Calu3 (cell line): ENCODE measurements at regions of chr2 and their contacts with region 1.

Region 1: GRCh38 chr2:27703638-27704341 is 40.1 kb downstream of the SLC4A1AP start:
- DNase-seq: peak; percentile 90
- H3K4me3 Mint-ChIP-seq: no peak overlapping the region
- H3K27ac Mint-ChIP-seq: peak overlapping the region; percentile 37
- H3K4me1 Mint-ChIP-seq: peaks cover 31% of the 10 kb centered on the region
- H3K27me3 Mint-ChIP-seq: no peaks in the 10 kb centered on the region
- CTCF ChIP-seq: peak; percentile 84

Region 2: GRCh38 chr2:27723372-27724144 is 19.8 kb after region 1 on chr2:
- CTCF ChIA-PET with region 1: interaction called, 18 read pairs
- intact Hi-C with region 1: no loop called
- DNase-seq: peak; percentile 72
- H3K4me3 Mint-ChIP-seq: no peak overlapping the region
- H3K27ac Mint-ChIP-seq: peak overlapping the region; percentile 53
- H3K4me1 Mint-ChIP-seq: peaks cover 45% of the 10 kb centered on the region
- H3K27me3 Mint-ChIP-seq: no peaks in the 10 kb centered on the region
- CTCF ChIP-seq: peak; percentile 66

Region 3: DNA sequence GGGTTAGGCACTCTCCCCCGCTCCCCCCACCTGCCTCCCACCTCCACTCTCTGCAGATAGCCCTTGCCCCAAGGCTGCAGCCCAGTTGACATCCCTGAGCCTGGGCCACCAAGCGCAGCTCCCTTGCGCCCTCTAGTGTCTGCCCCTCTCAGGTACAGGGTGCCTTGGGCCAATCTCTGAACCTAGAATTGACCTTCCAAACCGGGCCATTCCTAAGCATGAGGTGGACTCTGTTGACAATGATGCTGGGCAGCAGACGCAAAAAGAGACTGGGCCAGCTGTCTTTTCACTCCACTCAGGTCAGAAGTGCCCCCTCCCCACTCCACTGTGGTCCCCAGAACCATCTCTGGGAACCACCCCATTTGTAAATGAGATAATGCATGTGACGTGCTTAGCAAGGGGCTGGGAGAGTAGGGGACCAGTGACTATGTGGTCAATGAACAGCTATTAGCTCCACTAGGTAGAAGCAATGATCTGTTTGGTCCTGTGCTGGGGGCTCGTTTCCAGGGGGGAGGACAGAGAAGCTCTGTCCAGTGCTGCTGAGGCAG is 748.8 kb after region 1 on chr2:
- CTCF ChIA-PET with region 1: interaction called, 4 read pairs
- intact Hi-C with region 1: loop called (anchors 1 kb)
- DNase-seq: peak; percentile 85
- H3K4me3 Mint-ChIP-seq: no peak overlapping the region
- H3K27ac Mint-ChIP-seq: no peak overlapping the region
- H3K4me1 Mint-ChIP-seq: peaks cover 24% of the 10 kb centered on the region
- H3K27me3 Mint-ChIP-seq: no peaks in the 10 kb centered on the region
- CTCF ChIP-seq: peak; percentile 86